ENCODE measurements at regions of chr10 and their contacts with region 1.

Region 1: DNA sequence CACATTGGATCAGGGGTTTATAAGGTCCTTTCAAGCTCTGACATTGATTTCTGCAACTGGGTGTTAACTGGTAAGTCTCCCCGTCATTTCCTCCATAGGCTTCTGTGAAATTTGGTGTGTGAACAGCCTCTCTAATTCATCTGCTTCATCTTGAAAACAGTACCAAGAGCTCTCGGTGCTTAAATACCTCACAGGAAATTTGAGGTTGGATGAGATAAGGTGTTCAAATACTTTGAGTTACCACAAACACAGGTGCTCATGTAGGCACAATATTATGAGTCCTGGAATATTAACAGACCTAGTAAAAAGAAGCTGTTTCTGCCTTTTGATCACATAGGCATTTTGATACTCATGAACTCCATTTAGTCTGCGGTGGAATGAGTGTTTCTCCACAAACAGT is 85.2 kb downstream of the RTKN2 start:
- DNase-seq: peak; percentile 61
- H3K4me3 Mint-ChIP-seq: peak overlapping the region; percentile 5
- H3K27ac Mint-ChIP-seq: peak overlapping the region; percentile 92
- H3K4me1 Mint-ChIP-seq: peaks cover 88% of the 10 kb centered on the region
- H3K27me3 Mint-ChIP-seq: no peaks in the 10 kb centered on the region

Region 2: GRCh38 chr10:61608255-61609039 is 575.0 kb before region 1 on chr10:
- intact Hi-C with region 1: no loop called
- DNase-seq: no peak
- H3K4me3 Mint-ChIP-seq: no peak overlapping the region
- H3K27ac Mint-ChIP-seq: no peak overlapping the region
- H3K4me1 Mint-ChIP-seq: no peaks in the 10 kb centered on the region
- H3K27me3 Mint-ChIP-seq: peaks cover 3% of the 10 kb centered on the region

Region 3: DNA sequence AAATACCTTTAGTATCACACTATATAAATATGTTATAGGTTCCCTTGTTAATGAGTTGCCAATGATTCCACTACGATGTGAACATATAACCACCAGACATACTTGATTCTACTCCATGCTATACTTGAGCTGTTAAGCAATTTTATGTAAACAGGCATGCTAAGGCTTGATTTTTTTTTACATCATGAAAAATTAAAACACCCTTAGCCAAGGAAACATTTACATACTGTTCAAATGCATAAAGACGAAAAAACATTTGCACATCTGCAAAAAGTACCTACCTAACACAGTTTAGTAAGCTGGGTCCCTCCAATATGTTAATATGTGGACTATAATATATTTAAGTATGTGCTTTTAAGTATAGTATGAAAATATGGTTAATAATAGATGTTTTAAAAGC is 529.7 kb before region 1 on chr10:
- intact Hi-C with region 1: no loop called
- DNase-seq: no peak
- H3K4me3 Mint-ChIP-seq: no peak overlapping the region
- H3K27ac Mint-ChIP-seq: no peak overlapping the region
- H3K4me1 Mint-ChIP-seq: no peaks in the 10 kb centered on the region
- H3K27me3 Mint-ChIP-seq: peaks cover 12% of the 10 kb centered on the region

Region 4: GRCh38 chr10:61779950-61780659 is 403.3 kb before region 1 on chr10:
- intact Hi-C with region 1: loop called (anchors 5 kb)
- DNase-seq: no peak
- H3K4me3 Mint-ChIP-seq: no peak overlapping the region
- H3K27ac Mint-ChIP-seq: peak overlapping the region; percentile 69
- H3K4me1 Mint-ChIP-seq: peaks cover 33% of the 10 kb centered on the region
- H3K27me3 Mint-ChIP-seq: peaks cover 4% of the 10 kb centered on the region

Region 5: DNA sequence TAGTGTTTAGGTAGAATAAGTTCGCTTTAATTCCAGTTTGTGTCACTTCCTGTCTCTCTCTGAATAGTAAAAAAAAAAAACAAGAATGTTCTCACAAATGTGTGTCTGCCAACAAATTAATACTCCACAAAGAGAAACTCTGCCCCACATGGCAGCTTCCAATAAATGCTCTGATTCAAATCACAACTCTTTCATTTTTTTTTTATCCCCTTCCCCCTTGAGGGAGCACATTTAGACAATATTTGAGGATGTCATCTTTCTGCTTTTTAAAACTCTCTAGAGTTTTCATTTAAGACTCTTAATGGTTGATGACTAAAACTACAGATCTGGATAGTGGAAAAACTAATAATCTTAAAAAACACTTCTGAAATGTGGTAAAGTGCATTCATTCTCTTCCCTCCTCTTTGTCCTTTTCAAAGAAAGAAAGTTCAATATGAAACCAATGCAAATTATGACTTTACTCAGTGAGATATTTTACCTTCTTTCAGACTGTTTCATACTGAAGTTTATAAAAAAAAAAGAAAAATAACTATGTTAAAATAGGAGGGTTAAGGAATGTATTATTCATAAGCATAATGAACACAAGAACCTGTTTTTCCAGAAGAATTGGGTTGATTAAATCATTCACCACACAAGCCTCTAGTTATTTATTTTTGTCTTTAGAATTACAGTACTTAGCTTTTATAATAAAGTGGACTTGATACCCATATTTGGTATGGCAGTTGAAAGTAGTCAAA is 239.6 kb before region 1 on chr10:
- intact Hi-C with region 1: loop called (anchors 1 kb)
- DNase-seq: no peak
- H3K4me3 Mint-ChIP-seq: peak overlapping the region; percentile 77
- H3K27ac Mint-ChIP-seq: peak overlapping the region; percentile 95
- H3K4me1 Mint-ChIP-seq: peaks cover 58% of the 10 kb centered on the region
- H3K27me3 Mint-ChIP-seq: no peaks in the 10 kb centered on the region

Region 6: DNA sequence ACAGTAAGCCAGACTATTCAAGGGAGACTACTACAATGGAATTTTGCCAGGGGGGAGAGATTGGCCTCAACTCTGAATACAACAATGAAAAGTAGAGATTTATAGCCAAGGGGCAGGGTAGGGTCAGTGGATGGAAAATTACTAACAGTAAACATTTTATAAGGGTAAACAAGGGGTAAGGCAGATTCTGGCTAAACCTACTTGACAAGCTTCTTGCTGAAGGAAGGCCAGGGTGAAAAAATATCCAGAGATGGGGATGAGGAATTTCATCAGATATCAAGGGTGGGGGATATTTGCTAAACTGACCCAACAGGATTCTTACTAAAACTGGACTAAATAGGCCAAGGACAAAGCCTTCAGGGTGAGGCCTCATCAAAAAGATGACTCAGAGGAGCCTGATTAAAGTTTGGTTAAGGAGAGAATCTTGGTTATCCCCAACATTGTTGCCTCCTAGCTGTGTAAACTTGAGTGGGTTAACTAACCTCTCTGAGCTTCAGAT is 71.1 kb before region 1 on chr10:
- intact Hi-C with region 1: loop called (anchors 2 kb)
- DNase-seq: no peak
- H3K4me3 Mint-ChIP-seq: no peak overlapping the region
- H3K27ac Mint-ChIP-seq: no peak overlapping the region
- H3K4me1 Mint-ChIP-seq: peaks cover 27% of the 10 kb centered on the region
- H3K27me3 Mint-ChIP-seq: no peaks in the 10 kb centered on the region

Region 7: DNA sequence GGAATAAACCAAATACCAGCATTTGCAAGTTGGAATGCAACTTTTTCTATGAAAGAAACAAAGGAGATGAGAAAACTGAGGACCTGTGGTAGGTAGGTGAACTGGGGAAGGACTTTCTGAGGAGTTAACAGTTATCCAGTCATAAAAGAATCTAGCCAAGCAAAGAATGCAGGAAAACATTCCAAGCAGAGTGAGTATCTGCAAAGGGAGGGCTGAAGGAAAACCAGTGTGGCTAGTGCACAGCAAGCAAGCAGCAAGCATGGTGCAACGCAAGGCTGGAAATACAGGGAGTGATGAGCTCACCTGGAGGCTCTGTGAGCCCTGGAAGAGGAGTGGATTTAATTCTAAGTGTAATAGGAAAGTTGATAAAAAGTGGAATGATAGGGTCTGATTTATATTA is 41.2 kb after region 1 on chr10:
- intact Hi-C with region 1: loop called (anchors 1 kb)
- DNase-seq: no peak
- H3K4me3 Mint-ChIP-seq: no peak overlapping the region
- H3K27ac Mint-ChIP-seq: no peak overlapping the region
- H3K4me1 Mint-ChIP-seq: peaks cover 5% of the 10 kb centered on the region
- H3K27me3 Mint-ChIP-seq: no peaks in the 10 kb centered on the region

Region 8: DNA sequence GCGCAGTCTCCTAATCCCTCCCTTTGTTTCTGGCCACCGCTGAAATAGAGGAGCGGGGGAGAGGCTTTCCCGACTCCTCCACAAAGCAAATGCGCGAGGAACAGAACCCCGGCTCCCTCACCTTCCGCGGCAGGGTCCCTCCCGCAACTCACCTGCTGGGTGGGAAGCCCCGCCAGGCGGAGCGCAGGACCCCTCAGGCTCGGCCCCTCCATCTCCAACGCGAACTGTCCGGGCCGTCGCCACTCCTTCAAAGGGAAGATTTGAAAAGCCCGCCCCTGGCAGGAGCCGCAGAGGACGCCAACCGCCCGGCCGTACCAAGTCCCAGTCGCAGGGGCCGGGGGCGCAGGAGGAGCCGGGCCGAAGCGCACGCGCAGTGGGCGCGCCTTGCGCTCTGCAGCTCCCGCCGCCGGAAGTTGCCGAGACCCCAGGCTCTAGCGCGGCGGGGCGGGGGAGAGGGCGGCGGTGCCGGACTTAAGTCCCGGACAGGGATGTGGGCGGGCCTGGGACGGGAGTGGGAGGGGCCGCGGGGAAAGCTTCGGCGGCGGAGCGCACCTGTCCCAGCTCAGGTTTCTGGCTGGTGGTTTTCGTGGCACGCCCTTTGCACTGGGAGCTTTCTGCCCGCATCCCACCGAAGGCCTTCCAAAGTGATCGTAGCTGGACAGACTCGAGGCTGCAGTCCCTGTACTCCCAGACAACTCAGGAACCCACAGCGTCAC is 85.1 kb after region 1 on chr10 and contains the start of gene RTKN2:
- intact Hi-C with region 1: no loop called
- DNase-seq: peak; percentile 75
- H3K4me3 Mint-ChIP-seq: peak within 1 kb of the TSS; percentile 83
- H3K27ac Mint-ChIP-seq: no peak within 1 kb of the TSS
- H3K4me1 Mint-ChIP-seq: peaks cover 32% of the 10 kb centered on the region
- H3K27me3 Mint-ChIP-seq: peaks cover 27% of the 10 kb centered on the region
- total RNA-seq, gene RTKN2: 3.0 and 3.7 TPM in 2 replicates

Region 9: GRCh38 chr10:62811159-62811875 is 627.9 kb after region 1 on chr10:
- intact Hi-C with region 1: loop called (anchors 1 kb)
- DNase-seq: peak; percentile 71
- H3K4me3 Mint-ChIP-seq: peak overlapping the region; percentile 98
- H3K27ac Mint-ChIP-seq: peak overlapping the region; percentile 94
- H3K4me1 Mint-ChIP-seq: peaks cover 84% of the 10 kb centered on the region
- H3K27me3 Mint-ChIP-seq: peaks cover 8% of the 10 kb centered on the region

Measured in activated T-helper 1 cell treated with anti-CD3 and anti-CD28 coated beads, Interleukin-12 subunit alpha, Interleukin-12 subunit beta, Interleukin-2, Interleukin-4 antibody, amounts not matched to agents 30 ng/mL and 10 ng/mL and 1 ng/mL, durations not matched to agents 14 hours and 24 hours and 36 hours (primary cell).